ENCODE measurements at regions of chr17 and their contacts with region 1.

Region 1: DNA sequence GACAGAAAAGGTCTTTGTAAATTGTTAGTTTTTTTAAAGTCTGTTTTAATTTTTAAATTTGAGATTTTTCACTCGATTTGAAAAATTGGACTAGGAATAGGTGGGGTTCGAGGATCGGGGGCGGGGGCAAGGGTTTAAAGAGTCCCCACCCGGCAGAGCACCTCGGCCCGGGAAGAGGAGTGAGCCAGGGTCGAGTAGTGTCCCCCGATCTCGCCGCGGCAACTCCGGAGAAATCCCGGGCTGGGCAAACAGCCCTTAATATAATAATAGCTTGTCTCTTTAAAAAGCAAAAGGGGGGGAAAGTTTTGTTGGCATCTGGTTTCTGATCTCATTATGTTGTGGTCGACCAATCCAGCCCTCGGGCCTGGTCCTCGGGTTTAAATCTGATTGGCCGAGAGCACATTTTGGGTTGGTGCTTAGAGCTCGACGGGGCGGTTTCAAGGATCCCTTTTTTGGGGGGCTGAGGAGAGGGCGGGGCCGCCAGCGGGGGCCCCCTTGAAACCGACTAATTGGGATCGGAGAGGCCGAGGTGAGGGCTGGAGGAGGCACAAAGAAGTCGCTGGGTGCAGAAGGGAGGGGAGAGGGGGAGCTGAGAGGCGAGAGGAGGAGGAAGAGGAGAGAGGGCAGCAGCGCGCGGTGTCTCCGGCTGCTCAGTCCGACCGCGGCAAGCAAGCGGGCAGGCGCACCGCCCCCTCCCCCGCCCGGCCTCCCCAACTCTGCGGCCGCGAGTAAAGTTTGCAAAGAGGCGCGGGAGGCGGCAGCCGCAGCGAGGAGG is at the start of gene FZD2:
- DNase-seq: peak; percentile 91
- ATAC-seq: peak; percentile 77
- H3K4me3 Mint-ChIP-seq: peak within 1 kb of the TSS; percentile 94
- H3K27ac Mint-ChIP-seq: peak within 1 kb of the TSS; percentile 100
- H3K4me1 Mint-ChIP-seq: peaks cover 54% of the 10 kb centered on the region
- H3K27me3 Mint-ChIP-seq: peaks cover 49% of the 10 kb centered on the region
- CTCF ChIP-seq: no peak
- total RNA-seq, gene FZD2: 37.6 to 42.8 TPM (median 38.5 TPM) in 3 replicates

Region 2: DNA sequence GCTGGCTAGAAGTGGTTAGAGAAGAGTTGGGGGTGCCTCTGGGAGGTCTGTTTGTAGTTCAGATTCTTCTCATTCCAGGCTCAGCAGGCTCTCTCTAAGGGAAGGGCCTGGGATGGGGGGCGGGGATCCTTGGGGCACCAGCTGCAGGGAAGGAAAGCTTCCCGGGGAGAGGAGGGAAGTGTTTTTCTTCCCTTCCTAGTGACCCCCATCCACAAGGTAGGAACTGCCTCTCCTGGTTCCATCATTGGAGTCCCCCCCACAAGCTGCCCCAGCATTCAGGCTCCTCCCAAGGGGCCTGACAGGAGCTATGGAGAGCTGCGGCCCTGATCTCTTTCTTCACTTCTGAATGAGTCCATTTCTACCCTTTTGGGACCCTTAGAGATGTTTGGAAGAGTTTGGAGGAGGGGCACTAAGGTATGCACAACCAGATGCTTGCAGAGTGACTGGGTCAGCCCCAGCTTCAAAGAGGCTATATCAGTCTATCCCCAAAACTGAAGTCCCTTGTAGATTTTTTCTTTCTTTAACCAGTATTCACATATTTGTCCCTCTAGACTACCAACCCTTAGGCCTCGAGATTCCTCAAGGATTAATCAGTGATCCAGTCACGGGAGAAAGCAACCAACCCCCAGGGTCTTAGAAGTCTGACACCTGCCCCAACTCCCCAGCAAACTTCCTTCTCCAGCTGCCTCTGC is 13.7 kb before region 1 on chr17:
- CTCF ChIA-PET with region 1: interaction called, 20 read pairs
- POLR2A ChIA-PET with region 1: interaction called, 79 read pairs
- DNase-seq: peak; percentile 85
- ATAC-seq: peak; percentile 68
- H3K4me3 Mint-ChIP-seq: peak overlapping the region; percentile 60
- H3K27ac Mint-ChIP-seq: peak overlapping the region; percentile 41
- H3K4me1 Mint-ChIP-seq: peaks cover 93% of the 10 kb centered on the region
- H3K27me3 Mint-ChIP-seq: peaks cover 89% of the 10 kb centered on the region
- CTCF ChIP-seq: no peak

Region 3: DNA sequence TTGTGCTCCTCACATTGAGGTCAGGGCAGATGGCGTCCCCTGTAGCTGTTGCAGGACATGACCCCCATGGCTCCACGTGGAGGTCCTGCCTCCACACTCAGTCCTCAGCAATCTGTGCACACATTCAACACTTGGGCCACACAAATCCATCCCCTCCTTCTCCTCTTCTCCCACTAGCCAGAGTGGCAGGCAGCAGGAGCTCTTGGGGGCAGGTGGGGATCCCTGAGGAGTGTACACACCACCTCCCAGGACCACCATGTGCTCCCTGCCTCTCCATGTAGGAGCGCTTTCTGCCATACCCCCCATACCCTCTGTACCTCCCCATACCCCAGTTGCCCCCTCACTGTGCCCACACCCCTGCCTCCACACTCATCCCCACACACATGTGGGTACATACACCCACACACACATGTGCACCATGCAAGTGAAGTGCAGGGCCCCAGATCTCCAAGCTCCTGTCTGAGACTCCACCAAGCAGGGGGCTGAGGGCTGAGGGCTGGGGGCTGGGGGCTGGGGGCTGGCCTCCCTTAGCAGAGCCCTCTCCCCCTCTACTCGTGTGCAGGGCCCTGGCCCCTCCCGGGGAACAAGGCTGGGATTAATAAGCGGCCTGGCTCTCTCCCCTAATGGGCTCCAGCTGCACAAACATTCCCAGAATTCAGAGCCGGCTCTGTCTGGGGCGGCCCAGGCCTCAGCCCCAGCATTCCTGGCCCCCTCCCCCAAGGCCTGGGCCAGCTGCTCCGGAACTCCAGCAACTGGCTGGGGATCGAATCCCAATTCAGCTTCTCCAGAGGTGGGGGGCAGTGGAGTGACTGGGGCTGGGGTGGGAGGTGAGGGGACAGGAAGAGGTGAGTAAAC is 51.0 kb after region 1 on chr17:
- CTCF ChIA-PET with region 1: interaction called, 4 read pairs
- POLR2A ChIA-PET with region 1: interaction called, 11 read pairs
- DNase-seq: peak; percentile 71
- ATAC-seq: peak; percentile 87
- H3K4me3 Mint-ChIP-seq: no peak overlapping the region
- H3K27ac Mint-ChIP-seq: no peak overlapping the region
- H3K4me1 Mint-ChIP-seq: peaks cover 35% of the 10 kb centered on the region
- H3K27me3 Mint-ChIP-seq: no peaks in the 10 kb centered on the region; the same call in 1 of the 2 replicates
- CTCF ChIP-seq: no peak

Measured in WTC11 (cell line).